ENCODE measurements at regions of chr12 and their contacts with region 1.

Region 1: GRCh38 chr12:26226629-26227360 is 31.4 kb downstream of the SSPN start:
- DNase-seq: no peak
- ATAC-seq: peak; percentile 84
- H3K4me3 ChIP-seq: peak overlapping the region; percentile 40 to 66
- H3K27ac ChIP-seq: peak overlapping the region; percentile 77
- H3K4me1 ChIP-seq: peaks cover 17% of the 10 kb centered on the region
- H3K27me3 ChIP-seq: peaks cover 5% of the 10 kb centered on the region; the same call in 1 of the 2 replicates
- CTCF ChIP-seq: no peak

Region 2: GRCh38 chr12:26298785-26299621 is 72.2 kb after region 1 on chr12:
- CTCF ChIA-PET with region 1: no interaction called
- POLR2A ChIA-PET with region 1: interaction called, 16 read pairs
- in situ Hi-C with region 1: no loop called
- intact Hi-C with region 1: no loop called
- DNase-seq: peak; percentile 97
- ATAC-seq: peak; percentile 96
- H3K4me3 ChIP-seq: peak overlapping the region in 1 of 2 experiments; percentile 29; a peak in 2 of 4 replicates
- H3K27ac ChIP-seq: peak overlapping the region; percentile 49
- H3K4me1 ChIP-seq: peaks cover 14% of the 10 kb centered on the region
- H3K27me3 ChIP-seq: no peaks in the 10 kb centered on the region
- CTCF ChIP-seq: peak; percentile 22; the same call in 1 of the 2 replicates

Region 3: GRCh38 chr12:26512213-26512612 is 285.4 kb after region 1 on chr12:
- CTCF ChIA-PET with region 1: no interaction called
- POLR2A ChIA-PET with region 1: interaction called, 10 read pairs
- in situ Hi-C with region 1: no loop called
- intact Hi-C with region 1: no loop called
- DNase-seq: no peak
- ATAC-seq: no peak
- H3K4me3 ChIP-seq: no peak overlapping the region
- H3K27ac ChIP-seq: no peak overlapping the region
- H3K4me1 ChIP-seq: no peaks in the 10 kb centered on the region
- H3K27me3 ChIP-seq: no peaks in the 10 kb centered on the region
- CTCF ChIP-seq: no peak

Measured in Panc1 (cell line).